Sigmoid colon (tissue), 7 donors: ENCODE measurements at regions of chr1 and their contacts with region 1.

Region 1: DNA sequence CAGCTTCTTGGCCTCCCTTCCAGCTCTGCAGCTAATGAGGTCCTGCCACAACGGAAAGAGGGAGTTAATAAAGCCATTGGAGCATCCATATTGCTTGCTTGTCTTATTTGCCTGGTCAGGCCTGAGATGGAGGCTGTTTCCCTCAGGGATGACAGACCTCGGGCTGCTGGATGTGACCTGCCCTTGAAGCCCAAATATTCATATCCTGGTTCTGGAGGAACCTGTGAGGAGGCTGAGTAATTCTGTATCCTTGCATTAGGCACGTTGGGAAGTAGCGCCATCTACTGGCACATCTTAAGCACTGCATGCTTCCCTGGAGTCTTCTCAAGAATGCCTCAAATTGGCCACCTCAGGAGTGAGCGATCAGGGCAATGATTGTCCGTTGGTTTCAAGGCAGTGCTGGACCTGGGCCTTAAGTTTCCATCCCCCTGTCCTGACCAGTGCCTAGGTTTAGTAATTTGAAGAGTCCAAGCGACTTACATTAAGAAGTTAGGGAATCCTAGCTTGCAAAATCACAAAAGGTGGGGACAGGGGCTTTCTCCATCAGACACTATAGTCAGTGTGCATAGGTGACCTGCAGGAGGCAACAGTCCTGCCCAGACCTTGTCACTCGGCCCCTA is 13.8 kb upstream of the NASP start:
- DNase-seq: peak; percentile 87
- H3K4me3 ChIP-seq: no peak overlapping the region
- H3K27ac ChIP-seq: peak overlapping the region in 1 of 4 donors; percentile 29
- H3K4me1 ChIP-seq: peaks cover 0 to 12% (median 6%) of the 10 kb centered on the region in 4 donors
- H3K27me3 ChIP-seq: no peaks in the 10 kb centered on the region
- CTCF ChIP-seq: peak; percentile 82 to 99 (median 92)
- EP300 ChIP-seq: no peak
- POLR2A ChIP-seq: no peak

Region 2: GRCh38 chr1:45359882-45360513 is 210.1 kb before region 1 on chr1:
- intact Hi-C with region 1: loop called (anchors 1 kb)
- DNase-seq: peak; percentile 81
- H3K4me3 ChIP-seq: no peak overlapping the region
- H3K27ac ChIP-seq: peak overlapping the region; percentile 67 to 76 (median 72)
- H3K4me1 ChIP-seq: peaks cover 0 to 24% (median 14%) of the 10 kb centered on the region in 4 donors
- H3K27me3 ChIP-seq: no peaks in the 10 kb centered on the region
- CTCF ChIP-seq: peak; percentile 30 to 71 (median 54)
- EP300 ChIP-seq: no peak
- POLR2A ChIP-seq: no peak

Region 3: DNA sequence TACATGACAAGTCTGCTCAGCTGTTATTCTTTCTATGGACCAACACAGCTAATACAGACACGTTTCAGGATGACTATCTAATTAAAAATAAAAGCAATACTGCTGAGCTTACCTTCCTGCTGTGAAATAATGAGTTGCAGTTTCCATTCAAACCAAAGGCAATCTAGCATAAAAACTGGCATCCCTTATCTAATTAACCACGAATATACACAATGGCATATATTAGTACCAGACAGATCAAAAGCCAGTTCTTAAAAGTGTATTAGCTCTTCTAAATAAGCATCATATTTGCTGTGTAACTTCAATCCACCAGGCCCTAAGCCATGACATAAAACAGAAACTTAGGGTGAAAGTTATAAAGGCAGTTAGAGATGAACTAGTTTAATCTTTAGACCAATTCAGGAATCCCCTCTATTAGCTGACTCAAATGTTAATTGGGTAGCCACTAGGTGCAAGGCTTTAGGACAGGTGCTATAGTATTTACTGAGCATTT is 99.7 kb before region 1 on chr1:
- intact Hi-C with region 1: no loop called
- DNase-seq: no peak
- H3K4me3 ChIP-seq: no peak overlapping the region
- H3K27ac ChIP-seq: no peak overlapping the region
- H3K4me1 ChIP-seq: no peaks in the 10 kb centered on the region
- H3K27me3 ChIP-seq: no peaks in the 10 kb centered on the region
- CTCF ChIP-seq: no peak
- EP300 ChIP-seq: no peak
- POLR2A ChIP-seq: no peak

Region 4: DNA sequence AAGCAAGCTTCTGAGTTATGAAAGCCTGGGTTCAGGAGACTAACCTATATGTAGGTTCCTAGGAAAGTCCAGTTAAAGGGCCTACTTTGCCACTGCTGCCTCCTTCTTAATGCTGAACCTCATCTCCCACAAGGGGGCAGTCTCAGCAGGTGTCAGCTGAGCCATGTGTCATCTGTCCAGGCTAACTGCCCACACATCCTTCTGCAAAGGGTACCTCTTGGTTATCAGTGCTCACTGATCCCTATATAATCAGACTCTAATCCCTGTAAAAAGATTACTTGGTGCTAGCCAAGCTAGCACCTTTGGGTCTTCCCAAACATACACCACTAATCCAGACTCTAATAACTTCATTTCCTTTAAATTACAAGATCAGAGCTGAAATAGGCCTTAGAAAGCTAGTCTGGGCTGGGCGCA is 57.4 kb before region 1 on chr1:
- intact Hi-C with region 1: loop called (anchors 1 kb)
- DNase-seq: peak; percentile 67
- H3K4me3 ChIP-seq: no peak overlapping the region
- H3K27ac ChIP-seq: no peak overlapping the region
- H3K4me1 ChIP-seq: peaks cover 0 to 24% (median 16%) of the 10 kb centered on the region in 4 donors
- H3K27me3 ChIP-seq: no peaks in the 10 kb centered on the region
- CTCF ChIP-seq: peak; percentile 6 to 66 (median 52)
- EP300 ChIP-seq: no peak
- POLR2A ChIP-seq: no peak